CD4-positive, alpha-beta T cell (primary cell): ENCODE measurements at regions of chr3 and their contacts with region 1.

Region 1: DNA sequence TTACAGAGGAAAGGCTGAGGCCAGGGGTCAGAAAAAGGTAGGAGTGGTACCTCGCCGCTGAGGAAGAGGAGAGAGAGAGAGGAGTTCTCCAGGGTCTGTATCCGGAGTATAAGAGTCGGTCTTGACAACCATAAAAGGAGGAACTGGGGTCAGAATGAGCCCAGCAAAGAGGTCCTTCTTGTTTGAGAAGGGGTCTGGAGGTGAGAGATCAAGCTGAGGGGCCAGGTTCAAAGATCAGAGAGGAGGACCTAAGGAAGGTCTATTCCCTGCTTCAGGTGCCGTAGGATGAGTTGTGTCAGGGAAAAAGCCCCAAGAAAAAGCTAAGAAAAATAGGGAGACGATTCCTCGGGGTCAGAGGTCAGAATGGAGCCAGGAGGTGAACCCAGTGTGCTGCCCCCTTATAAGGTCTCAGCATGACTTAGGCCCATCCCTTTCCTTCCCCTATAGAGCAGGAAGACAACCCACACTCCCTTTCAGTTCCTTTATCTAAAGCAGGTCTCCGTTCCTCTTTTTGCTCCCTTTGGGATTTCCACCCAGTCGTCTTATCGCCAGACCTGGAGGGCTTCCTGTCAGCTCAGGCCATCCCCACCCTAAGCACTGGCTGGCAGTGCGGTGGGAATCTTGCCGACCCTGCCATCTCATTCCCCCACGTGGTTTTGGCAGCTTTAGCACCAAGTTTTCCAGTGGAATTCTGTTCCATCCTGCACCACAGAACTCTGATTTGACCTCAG is 651 bp downstream of the MTMR14 start:
- DNase-seq: peak in 3 of 14 experiments; percentile 40 to 57 (median 53)
- ATAC-seq: no peak
- H3K4me3 ChIP-seq: peak overlapping the region; percentile 92
- H3K4me3 Mint-ChIP-seq: peak overlapping the region; percentile 96
- H3K27ac ChIP-seq: peak overlapping the region; percentile 78 to 92
- H3K27ac Mint-ChIP-seq: peak overlapping the region; percentile 87
- H3K4me1 ChIP-seq: peaks cover 36% of the 10 kb centered on the region
- H3K4me1 Mint-ChIP-seq: peaks cover 35% of the 10 kb centered on the region
- H3K27me3 ChIP-seq: no peaks in the 10 kb centered on the region
- H3K27me3 Mint-ChIP-seq: no peaks in the 10 kb centered on the region
- CTCF ChIP-seq: no peak

Region 2: GRCh38 chr3:8963137-8963869 is 686.7 kb before region 1 on chr3 and contains the start of gene RAD18:
- CTCF ChIA-PET with region 1: no interaction called
- POLR2A ChIA-PET with region 1: interaction called, 3 read pairs
- intact Hi-C with region 1: loop called in 1 of 2 experiments (anchors 5 kb)
- DNase-seq: peak; percentile 87 to 96 (median 90)
- ATAC-seq: peak; percentile 93
- H3K4me3 ChIP-seq: peak within 1 kb of the TSS; percentile 88
- H3K4me3 Mint-ChIP-seq: peak within 1 kb of the TSS; percentile 97
- H3K27ac ChIP-seq: peak within 1 kb of the TSS; percentile 80 to 92
- H3K27ac Mint-ChIP-seq: peak within 1 kb of the TSS; percentile 95
- H3K4me1 ChIP-seq: peaks cover 15% of the 10 kb centered on the region
- H3K4me1 Mint-ChIP-seq: peaks cover 43% of the 10 kb centered on the region
- H3K27me3 ChIP-seq: no peaks in the 10 kb centered on the region
- H3K27me3 Mint-ChIP-seq: peaks cover 1% of the 10 kb centered on the region
- CTCF ChIP-seq: no peak
- total RNA-seq, gene RAD18: 9.6 to 10.0 TPM

Region 3: DNA sequence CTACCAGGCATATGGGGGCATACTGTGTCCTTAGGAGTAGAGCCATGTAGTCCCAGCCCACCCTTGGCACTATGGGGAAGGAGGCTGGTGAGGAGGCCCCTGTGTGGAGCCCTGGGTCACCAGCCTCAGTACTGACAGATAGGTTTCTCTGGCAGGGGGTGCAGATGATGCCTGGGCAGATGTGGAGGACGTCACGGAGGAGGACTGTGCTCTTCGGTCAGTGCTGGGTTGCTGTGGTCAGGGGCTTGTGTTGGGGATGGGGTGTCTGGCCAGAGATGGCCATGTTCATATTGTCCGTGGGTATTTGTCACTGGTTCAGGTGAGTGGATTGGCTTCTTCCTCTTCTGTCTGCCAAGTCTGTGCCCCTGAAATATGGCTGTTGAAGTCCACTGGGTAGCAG is 19.3 kb after region 1 on chr3:
- CTCF ChIA-PET with region 1: no interaction called
- POLR2A ChIA-PET with region 1: interaction called, 11 read pairs
- intact Hi-C with region 1: no loop called
- DNase-seq: no peak
- ATAC-seq: no peak
- H3K4me3 ChIP-seq: no peak overlapping the region
- H3K4me3 Mint-ChIP-seq: no peak overlapping the region
- H3K27ac ChIP-seq: no peak overlapping the region
- H3K27ac Mint-ChIP-seq: no peak overlapping the region
- H3K4me1 ChIP-seq: no peaks in the 10 kb centered on the region
- H3K4me1 Mint-ChIP-seq: no peaks in the 10 kb centered on the region
- H3K27me3 ChIP-seq: no peaks in the 10 kb centered on the region
- H3K27me3 Mint-ChIP-seq: no peaks in the 10 kb centered on the region
- CTCF ChIP-seq: no peak

Region 4: DNA sequence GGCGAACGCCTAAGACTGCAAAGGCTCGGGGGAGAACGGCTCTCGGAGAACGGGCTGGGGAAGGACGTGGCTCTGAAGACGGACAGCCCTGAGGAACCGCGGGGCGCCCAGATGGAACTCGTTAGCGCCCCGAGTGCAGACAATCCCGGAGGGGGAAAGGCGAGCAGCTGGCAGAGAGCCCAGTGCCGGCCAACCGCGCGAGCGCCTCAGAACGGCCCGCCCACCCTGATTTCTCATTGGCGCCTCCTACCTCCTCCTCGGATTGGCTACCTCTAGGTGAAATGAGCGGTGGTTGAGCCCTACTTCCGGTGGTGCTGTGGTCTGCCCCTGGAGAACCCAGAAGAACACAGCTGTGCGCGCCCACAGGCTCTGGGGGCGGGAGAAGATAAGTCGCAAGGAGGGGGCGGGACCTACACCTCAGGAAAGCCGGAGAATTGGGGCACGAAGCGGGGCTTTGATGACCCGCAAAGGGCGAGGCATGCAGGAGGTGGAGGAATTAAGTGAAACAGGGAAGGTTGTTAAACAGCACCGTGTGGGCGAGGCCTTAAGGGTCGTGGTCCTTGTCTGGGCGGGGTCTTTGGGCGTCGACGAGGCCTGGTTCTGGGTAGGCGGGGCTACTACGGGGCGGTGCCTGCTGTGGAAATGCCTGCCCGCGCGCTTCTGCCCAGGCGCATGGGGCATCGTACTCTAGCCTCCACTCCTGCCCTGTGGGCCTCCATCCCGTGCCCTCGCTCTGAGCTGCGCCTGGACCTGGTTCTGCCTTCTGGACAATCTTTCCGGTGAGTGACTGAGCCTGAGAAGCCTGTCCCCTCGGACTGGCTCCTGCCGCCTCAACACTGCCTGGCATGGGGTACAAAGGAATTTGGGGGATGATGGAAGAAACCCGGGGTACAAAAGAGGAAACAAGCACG is 99.9 kb after region 1 on chr3 and contains the start of gene OGG1:
- CTCF ChIA-PET with region 1: no interaction called
- POLR2A ChIA-PET with region 1: interaction called, 11 read pairs
- intact Hi-C with region 1: loop called in 1 of 2 experiments (anchors 5 kb)
- DNase-seq: peak; percentile 84 to 98 (median 91)
- ATAC-seq: peak; percentile 94
- H3K4me3 ChIP-seq: peak within 1 kb of the TSS; percentile 82
- H3K4me3 Mint-ChIP-seq: peak within 1 kb of the TSS; percentile 95
- H3K27ac ChIP-seq: peak within 1 kb of the TSS; percentile 69 to 74
- H3K27ac Mint-ChIP-seq: peak within 1 kb of the TSS; percentile 85
- H3K4me1 ChIP-seq: peaks cover 37% of the 10 kb centered on the region
- H3K4me1 Mint-ChIP-seq: peaks cover 48% of the 10 kb centered on the region
- H3K27me3 ChIP-seq: no peaks in the 10 kb centered on the region
- H3K27me3 Mint-ChIP-seq: no peaks in the 10 kb centered on the region
- CTCF ChIP-seq: no peak
- total RNA-seq, gene OGG1: 7.1 to 8.9 TPM

Region 5: DNA sequence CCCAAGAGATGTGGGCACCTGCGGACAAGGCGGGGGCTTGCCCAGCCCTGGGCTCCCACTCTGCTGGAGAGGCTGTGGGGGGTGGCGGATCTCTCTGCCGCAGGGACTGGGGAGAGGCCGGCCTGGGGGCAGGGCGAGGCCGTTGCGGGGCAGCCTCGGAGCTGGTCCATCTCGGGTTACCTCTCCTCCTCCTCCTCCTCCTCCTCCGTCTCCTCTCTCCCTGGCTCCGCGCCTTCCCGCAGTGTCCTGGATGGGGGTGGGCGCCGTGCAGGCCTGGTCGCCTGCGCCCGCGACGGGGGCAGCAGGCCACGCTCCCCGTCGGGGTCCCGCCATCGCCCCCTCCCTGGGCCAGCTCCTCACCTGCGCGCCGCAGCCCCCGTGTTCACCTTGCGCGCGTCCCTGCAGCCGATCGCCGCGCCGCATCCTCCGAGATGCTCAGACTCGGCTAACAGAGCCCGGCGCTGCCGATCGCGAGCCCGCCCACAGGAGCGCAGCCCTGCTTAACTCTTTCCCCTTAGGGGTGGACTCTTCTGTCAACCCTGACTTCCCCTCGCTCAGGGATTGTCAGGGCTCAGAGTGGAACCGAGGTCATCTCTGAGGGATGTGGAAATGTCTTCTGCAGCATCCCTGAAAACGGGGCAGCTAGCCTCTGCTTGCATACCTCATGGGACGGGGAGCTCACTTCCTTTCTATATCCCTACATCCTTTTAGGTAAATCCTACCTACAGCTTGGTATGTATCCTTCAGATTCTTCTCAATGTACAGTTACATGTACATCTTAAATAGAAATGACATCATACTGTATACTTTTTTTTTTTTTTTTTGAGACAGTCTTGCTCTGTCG is 302.2 kb after region 1 on chr3 and contains the start of gene PRRT3:
- CTCF ChIA-PET with region 1: no interaction called
- POLR2A ChIA-PET with region 1: no interaction called
- intact Hi-C with region 1: no loop called
- DNase-seq: peak; percentile 37 to 74 (median 52)
- ATAC-seq: peak; percentile 95
- H3K4me3 ChIP-seq: peak within 1 kb of the TSS; percentile 77
- H3K4me3 Mint-ChIP-seq: peak within 1 kb of the TSS; percentile 88
- H3K27ac ChIP-seq: no peak within 1 kb of the TSS
- H3K27ac Mint-ChIP-seq: peak within 1 kb of the TSS; percentile 41
- H3K4me1 ChIP-seq: peaks cover 21% of the 10 kb centered on the region
- H3K4me1 Mint-ChIP-seq: peaks cover 21% of the 10 kb centered on the region
- H3K27me3 ChIP-seq: no peaks in the 10 kb centered on the region
- H3K27me3 Mint-ChIP-seq: no peaks in the 10 kb centered on the region
- CTCF ChIP-seq: no peak
- total RNA-seq, gene PRRT3: 6.3 to 8.3 TPM